ENCODE measurements at regions of chr7 and their contacts with region 1.

Region 1: DNA sequence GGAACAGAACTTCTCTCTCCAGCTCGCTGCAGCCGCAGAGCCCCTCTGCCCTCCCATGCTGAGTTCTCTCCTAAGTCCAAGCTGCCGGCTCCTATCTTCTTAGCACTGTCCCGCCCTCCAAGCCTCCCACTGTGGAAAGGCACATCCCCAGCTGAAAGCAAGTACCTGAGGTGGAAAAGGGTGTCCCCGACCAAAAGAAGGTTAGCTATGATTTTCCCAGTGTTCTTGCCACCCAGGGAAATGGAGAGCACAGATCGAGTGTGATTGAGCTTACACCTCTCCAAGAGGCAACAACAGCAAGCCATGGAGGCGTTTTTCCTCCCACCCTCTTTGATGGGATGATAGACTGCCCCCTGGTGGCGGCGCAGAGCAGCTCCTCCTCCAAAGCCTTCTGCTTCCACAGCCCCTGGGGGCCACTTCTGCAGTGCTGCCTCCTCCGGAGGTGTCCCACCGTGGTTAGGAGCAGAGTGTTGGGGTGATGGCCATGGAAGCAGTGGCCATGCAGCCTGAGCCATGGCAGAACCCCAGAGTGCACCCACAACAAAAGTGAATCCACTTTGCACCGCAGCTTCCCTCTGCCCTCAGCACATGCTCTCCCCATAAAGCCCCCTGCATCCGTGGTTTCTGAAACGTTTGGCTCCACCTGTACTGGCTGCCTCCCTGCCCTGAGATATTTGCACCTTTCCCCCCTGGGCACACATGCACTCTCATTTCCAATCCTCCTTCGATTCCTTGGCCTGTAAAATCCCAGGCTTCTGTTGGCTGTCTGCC is 143.1 kb upstream of the STK17A start:
- DNase-seq: peak; percentile 60
- H3K4me3 Mint-ChIP-seq: no peak overlapping the region
- H3K27ac Mint-ChIP-seq: no peak overlapping the region
- H3K4me1 Mint-ChIP-seq: no peaks in the 10 kb centered on the region
- H3K27me3 Mint-ChIP-seq: peaks cover 6% of the 10 kb centered on the region

Region 2: DNA sequence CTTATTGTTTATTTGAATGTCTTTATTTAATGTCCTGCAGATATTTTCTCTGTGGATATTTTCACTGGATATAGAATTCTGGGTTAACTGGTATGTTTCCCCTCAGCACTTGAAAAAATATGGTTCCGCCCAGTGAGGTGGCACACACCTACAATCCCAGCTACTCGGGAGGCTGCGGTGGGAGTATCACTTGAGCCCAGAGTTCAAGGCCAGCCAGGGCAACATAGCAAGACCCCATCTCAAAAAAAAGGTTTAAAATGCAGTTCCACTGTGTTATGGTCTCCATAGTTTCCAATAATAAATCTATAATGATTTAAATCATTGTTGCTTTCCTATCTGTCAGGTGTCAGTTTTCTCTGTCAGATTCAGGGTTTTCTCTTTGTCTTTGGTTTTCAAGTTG is 22.4 kb before region 1 on chr7:
- CTCF ChIA-PET with region 1: interaction called, 11 read pairs
- POLR2A ChIA-PET with region 1: no interaction called
- DNase-seq: no peak
- H3K4me3 Mint-ChIP-seq: no peak overlapping the region
- H3K27ac Mint-ChIP-seq: no peak overlapping the region
- H3K4me1 Mint-ChIP-seq: no peaks in the 10 kb centered on the region
- H3K27me3 Mint-ChIP-seq: peaks cover 14% of the 10 kb centered on the region

Region 3: GRCh38 chr7:43454936-43455518 is 15.2 kb after region 1 on chr7:
- CTCF ChIA-PET with region 1: interaction called, 26 read pairs
- POLR2A ChIA-PET with region 1: no interaction called
- DNase-seq: no peak
- H3K4me3 Mint-ChIP-seq: no peak overlapping the region
- H3K27ac Mint-ChIP-seq: no peak overlapping the region
- H3K4me1 Mint-ChIP-seq: peaks cover 3% of the 10 kb centered on the region
- H3K27me3 Mint-ChIP-seq: peaks cover 20% of the 10 kb centered on the region

Region 4: GRCh38 chr7:43693687-43694398 is 254.0 kb after region 1 on chr7:
- CTCF ChIA-PET with region 1: no interaction called
- POLR2A ChIA-PET with region 1: no interaction called
- DNase-seq: no peak
- H3K4me3 Mint-ChIP-seq: no peak overlapping the region
- H3K27ac Mint-ChIP-seq: no peak overlapping the region
- H3K4me1 Mint-ChIP-seq: peaks cover 6% of the 10 kb centered on the region
- H3K27me3 Mint-ChIP-seq: no peaks in the 10 kb centered on the region